ENCODE measurements at regions of chr9 and their contacts with region 1.

Region 1: DNA sequence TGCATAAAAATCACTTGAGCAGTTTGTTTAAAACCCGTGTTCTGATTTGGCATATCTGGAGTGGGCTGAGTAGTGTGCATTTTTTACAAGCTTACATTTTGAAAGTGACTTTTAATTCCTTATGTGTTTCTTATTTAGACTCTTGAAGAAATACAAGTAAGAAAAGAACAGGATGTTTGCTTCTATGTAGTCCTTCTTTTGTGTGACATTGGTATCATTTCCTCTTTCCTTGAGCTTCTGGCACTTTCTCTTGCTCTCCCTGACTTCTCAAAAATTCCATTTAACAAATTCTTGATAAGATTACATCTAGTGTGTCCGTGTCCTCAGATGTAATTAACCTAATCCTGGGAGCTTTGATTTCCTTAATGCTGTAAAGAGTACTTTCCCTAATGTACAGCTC is 12.5 kb downstream of the GARNL3 start:
- DNase-seq: no peak
- H3K4me3 ChIP-seq: no peak overlapping the region
- H3K27ac ChIP-seq: peak overlapping the region; percentile 9
- H3K4me1 ChIP-seq: no peaks in the 10 kb centered on the region
- H3K27me3 ChIP-seq: no peaks in the 10 kb centered on the region
- CTCF ChIP-seq: no peak
- POLR2A ChIP-seq: no peak

Region 2: DNA sequence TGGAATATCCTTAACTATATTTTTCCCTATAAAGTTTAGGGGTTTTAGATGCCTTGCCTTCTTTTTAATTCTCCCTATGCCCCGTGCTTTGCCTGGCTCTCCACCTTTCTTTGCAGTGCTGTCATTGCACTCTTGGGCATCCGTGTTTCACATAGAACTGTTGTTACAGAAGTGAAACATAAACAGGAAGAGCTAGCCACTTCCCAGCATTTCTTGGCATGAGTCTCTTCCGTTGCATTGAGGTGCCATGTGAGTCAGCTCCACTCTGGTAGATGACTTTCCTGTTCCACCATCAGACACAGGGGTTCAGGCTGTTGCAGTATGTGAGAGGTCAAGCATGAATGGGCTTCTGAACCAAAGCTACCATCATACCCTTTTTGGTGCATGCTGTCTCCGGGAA is 228.1 kb before region 1 on chr9:
- intact Hi-C with region 1: no loop called
- DNase-seq: peak; percentile 64 to 91
- H3K4me3 ChIP-seq: peak overlapping the region in 1 of 2 donors; percentile 14
- H3K27ac ChIP-seq: peak overlapping the region; percentile 26
- H3K4me1 ChIP-seq: peaks cover 22% of the 10 kb centered on the region
- H3K27me3 ChIP-seq: no peaks in the 10 kb centered on the region
- CTCF ChIP-seq: peak in 2 of 3 experiments; percentile 18 to 47
- POLR2A ChIP-seq: no peak

Region 3: GRCh38 chr9:127244609-127245601 is 32.2 kb before region 1 on chr9:
- intact Hi-C with region 1: loop called (anchors 2 kb)
- DNase-seq: peak in 1 of 2 donors; percentile 94
- H3K4me3 ChIP-seq: peak overlapping the region; percentile 57
- H3K27ac ChIP-seq: peak overlapping the region; percentile 79
- H3K4me1 ChIP-seq: peaks cover 15% of the 10 kb centered on the region
- H3K27me3 ChIP-seq: no peaks in the 10 kb centered on the region
- CTCF ChIP-seq: no peak
- POLR2A ChIP-seq: peak in 1 of 2 donors; percentile 42

Region 4: DNA sequence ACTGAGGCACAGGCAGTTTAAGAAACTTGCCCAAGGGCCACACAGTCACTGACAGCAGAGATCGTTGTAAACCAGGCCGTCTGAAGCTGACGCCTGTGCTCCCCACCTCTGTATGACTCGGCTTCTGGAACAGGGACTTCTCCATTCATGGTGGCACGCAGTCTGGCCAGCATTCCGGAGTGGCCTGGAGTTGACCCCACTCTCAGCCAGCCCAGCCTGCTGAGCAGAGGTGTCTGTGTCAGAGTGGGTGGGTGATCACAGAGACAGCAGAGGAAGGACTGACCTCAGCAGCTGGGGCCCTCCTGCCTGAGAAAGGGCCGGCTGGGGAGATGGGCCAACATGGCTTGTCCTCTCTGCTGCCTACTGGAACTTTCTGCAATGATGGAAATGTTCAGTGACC is 186.8 kb after region 1 on chr9:
- intact Hi-C with region 1: no loop called
- DNase-seq: no peak
- H3K4me3 ChIP-seq: no peak overlapping the region
- H3K27ac ChIP-seq: no peak overlapping the region
- H3K4me1 ChIP-seq: no peaks in the 10 kb centered on the region
- H3K27me3 ChIP-seq: no peaks in the 10 kb centered on the region
- CTCF ChIP-seq: no peak
- POLR2A ChIP-seq: no peak